Natural killer cell (primary cell): ENCODE measurements at regions of chr6 and their contacts with region 1.

Region 1: GRCh38 chr6:135128268-135128914 is 52.7 kb upstream of the MYB start:
- DNase-seq: peak; percentile 44 to 80
- ATAC-seq: peak; percentile 90 to 96 (median 93)
- H3K4me3 ChIP-seq: no peak overlapping the region
- H3K4me3 Mint-ChIP-seq: peak overlapping the region; percentile 74
- H3K27ac ChIP-seq: peak overlapping the region; percentile 83
- H3K27ac Mint-ChIP-seq: peak overlapping the region; percentile 89 to 92
- H3K4me1 ChIP-seq: peaks cover 34% of the 10 kb centered on the region
- H3K4me1 Mint-ChIP-seq: peaks cover 43 to 45% of the 10 kb centered on the region in 2 donors
- H3K27me3 ChIP-seq: no peaks in the 10 kb centered on the region
- H3K27me3 Mint-ChIP-seq: no peaks in the 10 kb centered on the region
- CTCF ChIP-seq: no peak

Region 2: GRCh38 chr6:135054569-135055498 is 73.6 kb before region 1 on chr6 and contains the start of gene HBS1L:
- intact Hi-C with region 1: loop called (anchors 5 kb)
- DNase-seq: peak; percentile 93 to 100
- ATAC-seq: peak; percentile 95 to 99 (median 97)
- H3K4me3 ChIP-seq: peak within 1 kb of the TSS; percentile 89
- H3K4me3 Mint-ChIP-seq: peak within 1 kb of the TSS; percentile 97
- H3K27ac ChIP-seq: peak within 1 kb of the TSS; percentile 93
- H3K27ac Mint-ChIP-seq: peak within 1 kb of the TSS; percentile 98 to 100
- H3K4me1 ChIP-seq: peaks cover 12% of the 10 kb centered on the region
- H3K4me1 Mint-ChIP-seq: peaks cover 34 to 35% of the 10 kb centered on the region in 2 donors
- H3K27me3 ChIP-seq: no peaks in the 10 kb centered on the region
- H3K27me3 Mint-ChIP-seq: peaks cover 0 to 21% of the 10 kb centered on the region in 2 donors
- CTCF ChIP-seq: no peak
- total RNA-seq, gene HBS1L: 75.3 to 82.2 (median 80.1) TPM

Region 3: DNA sequence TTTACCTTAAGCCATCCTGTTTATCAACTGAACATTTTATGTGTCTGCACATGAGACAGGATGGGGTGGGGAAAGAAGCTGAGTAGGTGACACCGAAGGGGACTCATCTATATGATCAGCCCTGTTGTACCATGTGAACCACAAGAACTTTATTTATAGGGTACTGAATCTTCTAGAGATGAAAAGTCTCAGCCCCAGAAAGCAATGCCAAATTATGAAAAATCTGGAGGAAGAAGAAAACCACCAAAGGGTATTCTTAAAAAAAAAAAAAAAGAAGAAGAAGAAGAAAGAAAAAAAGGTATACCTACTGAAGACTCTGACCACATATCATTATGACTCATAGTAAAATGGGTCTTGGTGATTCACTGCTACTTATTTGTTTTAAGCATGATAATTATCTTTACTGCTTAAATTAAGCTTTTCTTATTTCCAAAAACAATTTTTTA is 34.0 kb before region 1 on chr6:
- intact Hi-C with region 1: loop called (anchors 5 kb)
- DNase-seq: peak in 1 of 2 donors; percentile 66
- ATAC-seq: peak in 2 of 3 donors; percentile 42 to 70
- H3K4me3 ChIP-seq: no peak overlapping the region
- H3K4me3 Mint-ChIP-seq: no peak overlapping the region
- H3K27ac ChIP-seq: no peak overlapping the region
- H3K27ac Mint-ChIP-seq: no peak overlapping the region
- H3K4me1 ChIP-seq: peaks cover 2% of the 10 kb centered on the region
- H3K4me1 Mint-ChIP-seq: peaks cover under 1 to 5% of the 10 kb centered on the region in 2 donors
- H3K27me3 ChIP-seq: no peaks in the 10 kb centered on the region
- H3K27me3 Mint-ChIP-seq: no peaks in the 10 kb centered on the region
- CTCF ChIP-seq: no peak

Region 4: GRCh38 chr6:135162678-135163439 is 34.5 kb after region 1 on chr6:
- intact Hi-C with region 1: no loop called
- DNase-seq: peak in 1 of 2 donors; percentile 66
- ATAC-seq: no peak
- H3K4me3 ChIP-seq: no peak overlapping the region
- H3K4me3 Mint-ChIP-seq: no peak overlapping the region
- H3K27ac ChIP-seq: no peak overlapping the region
- H3K27ac Mint-ChIP-seq: no peak overlapping the region
- H3K4me1 ChIP-seq: peaks cover 2% of the 10 kb centered on the region
- H3K4me1 Mint-ChIP-seq: peaks cover 7 to 16% of the 10 kb centered on the region in 2 donors
- H3K27me3 ChIP-seq: no peaks in the 10 kb centered on the region
- H3K27me3 Mint-ChIP-seq: no peaks in the 10 kb centered on the region
- CTCF ChIP-seq: peak; percentile 67